ENCODE measurements at regions of chr3 and their contacts with region 1.

Region 1: DNA sequence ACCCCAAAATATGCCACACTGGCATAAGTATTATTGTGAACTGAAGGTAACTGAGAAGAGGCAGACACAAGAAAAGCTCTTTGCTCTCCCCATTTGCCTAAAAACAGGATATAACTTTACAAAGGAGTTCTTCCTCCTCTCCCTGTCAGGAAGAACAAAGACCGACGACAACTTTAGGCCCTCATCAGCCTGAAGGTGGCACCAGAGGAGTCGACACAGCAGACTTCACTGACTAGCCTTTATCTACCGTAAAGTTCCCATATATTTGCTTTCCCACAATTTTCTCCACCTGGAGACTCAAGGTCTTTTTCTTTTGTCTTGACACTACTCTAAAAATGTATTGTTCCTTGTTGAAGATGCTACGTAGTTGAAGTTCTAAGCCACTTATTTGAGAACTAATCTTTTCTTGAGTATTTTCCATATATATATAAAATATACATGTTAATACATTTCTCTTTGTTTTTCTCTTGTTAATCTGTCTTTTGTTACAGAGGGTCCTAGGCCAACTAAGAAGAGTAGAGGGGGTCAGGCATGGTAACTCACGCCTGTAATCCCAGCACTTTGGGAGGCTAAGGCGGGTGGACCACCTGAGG is 16.2 kb upstream of the XIRP1 start:
- DNase-seq: peak; percentile 52 to 70
- ATAC-seq: peak; percentile 96 to 99
- H3K4me3 ChIP-seq: no peak overlapping the region
- H3K27ac ChIP-seq: peak overlapping the region; percentile 11 to 58 (median 50)
- H3K4me1 ChIP-seq: peaks cover 9 to 15% of the 10 kb centered on the region in 2 donors
- H3K27me3 ChIP-seq: no peaks in the 10 kb centered on the region
- CTCF ChIP-seq: peak; percentile 45 to 78 (median 69)
- POLR2A ChIP-seq: no peak

Region 2: DNA sequence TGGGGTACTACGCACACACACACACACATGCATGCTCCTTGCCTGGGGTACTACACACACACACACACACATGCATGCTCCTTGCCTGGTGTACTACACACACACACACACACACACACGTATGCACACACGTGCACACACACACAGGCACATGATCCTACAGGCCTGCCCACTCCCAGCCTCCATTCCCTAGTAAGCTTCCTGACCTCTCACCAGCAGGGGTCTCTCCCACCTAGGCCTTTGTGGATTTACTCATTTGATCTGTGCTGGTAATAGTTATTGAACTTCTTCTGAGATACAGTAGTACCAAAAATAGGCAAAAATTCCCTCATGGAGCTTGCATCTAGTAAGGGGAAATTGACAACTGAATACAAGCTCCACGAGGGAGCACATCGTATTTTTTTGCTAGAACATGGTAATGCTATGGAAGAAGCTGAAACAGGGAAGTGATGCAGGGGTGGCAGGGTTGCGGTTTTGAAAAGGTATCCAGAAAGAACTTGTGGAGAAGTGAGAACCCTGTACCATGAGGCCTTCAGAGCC is 82.0 kb before region 1 on chr3:
- in situ Hi-C with region 1: no loop called
- intact Hi-C with region 1: loop called (anchors 5 kb)
- DNase-seq: no peak
- ATAC-seq: peak; percentile 63 to 77
- H3K4me3 ChIP-seq: no peak overlapping the region
- H3K27ac ChIP-seq: no peak overlapping the region
- H3K4me1 ChIP-seq: no peaks in the 10 kb centered on the region
- H3K27me3 ChIP-seq: no peaks in the 10 kb centered on the region
- CTCF ChIP-seq: peak; percentile 55 to 75 (median 64)
- POLR2A ChIP-seq: no peak

Region 3: DNA sequence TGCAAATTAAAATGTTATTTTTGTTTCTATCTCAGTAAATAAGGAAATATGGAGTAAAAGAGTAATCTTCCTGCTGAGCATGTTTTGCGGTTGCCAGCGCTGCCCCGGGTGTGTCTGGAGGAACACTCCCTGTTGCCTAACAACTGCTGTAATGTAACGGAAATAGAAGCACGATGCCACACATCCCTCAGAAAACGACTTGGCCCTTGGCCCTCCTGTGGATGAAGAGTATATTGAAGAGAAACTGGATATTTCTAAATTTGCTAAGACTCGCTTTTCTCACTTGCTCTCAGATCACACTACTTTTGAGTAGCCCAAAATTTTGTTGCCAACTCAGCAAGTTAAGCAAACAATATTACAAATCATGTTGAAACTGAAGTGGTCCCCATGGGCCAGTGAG is 52.4 kb after region 1 on chr3:
- in situ Hi-C with region 1: loop called in 1 of 4 experiments (anchors 10 kb)
- intact Hi-C with region 1: loop called (anchors 2 kb)
- DNase-seq: peak; percentile 85 to 91
- ATAC-seq: peak; percentile 100
- H3K4me3 ChIP-seq: peak overlapping the region in 1 of 4 donors; percentile 16
- H3K27ac ChIP-seq: peak overlapping the region; percentile 63 to 77 (median 72)
- H3K4me1 ChIP-seq: peaks cover 28 to 43% of the 10 kb centered on the region in 2 donors
- H3K27me3 ChIP-seq: no peaks in the 10 kb centered on the region
- CTCF ChIP-seq: peak; percentile 60 to 81 (median 67)
- POLR2A ChIP-seq: no peak

Region 4: DNA sequence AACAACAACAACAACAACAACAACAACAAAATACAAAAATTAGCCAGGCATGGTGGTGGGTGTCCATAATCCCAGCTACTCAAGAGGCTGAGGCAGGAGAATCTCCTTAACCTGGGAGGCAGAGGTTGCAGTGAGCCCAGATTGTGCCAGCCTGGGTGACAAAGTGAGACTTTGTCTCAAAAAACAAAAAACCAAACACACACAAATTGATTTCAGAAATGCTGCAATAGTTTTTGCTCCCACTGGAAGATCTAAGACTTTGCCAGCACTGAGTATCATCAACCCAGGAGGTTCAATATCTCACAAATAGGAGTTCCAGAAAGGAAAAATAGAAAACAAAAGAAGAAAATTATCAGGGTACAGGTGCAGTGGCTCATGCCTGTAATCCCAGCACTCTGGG is 104.7 kb after region 1 on chr3:
- in situ Hi-C with region 1: no loop called
- intact Hi-C with region 1: no loop called
- DNase-seq: no peak
- ATAC-seq: no peak
- H3K4me3 ChIP-seq: no peak overlapping the region
- H3K27ac ChIP-seq: no peak overlapping the region
- H3K4me1 ChIP-seq: no peaks in the 10 kb centered on the region
- H3K27me3 ChIP-seq: no peaks in the 10 kb centered on the region
- CTCF ChIP-seq: no peak
- POLR2A ChIP-seq: no peak